Heart left ventricle (tissue), 16 donors: ENCODE measurements at regions of chr5 and their contacts with region 1.

Region 1: GRCh38 chr5:923281-923873 is 30.7 kb downstream of the TRIP13 start:
- DNase-seq: peak; percentile 78 to 89 (median 84)
- ATAC-seq: peak; percentile 78 to 93 (median 92)
- H3K4me3 ChIP-seq: no peak overlapping the region
- H3K27ac ChIP-seq: no peak overlapping the region
- H3K4me1 ChIP-seq: peaks cover 0 to 16% (median 8%) of the 10 kb centered on the region in 12 donors
- H3K27me3 ChIP-seq: peaks cover 0 to 29% (median 6%) of the 10 kb centered on the region in 9 donors
- CTCF ChIP-seq: peak; percentile 70 to 91 (median 86)
- POLR2A ChIP-seq: no peak

Region 2: GRCh38 chr5:1004461-1005248 is 81.3 kb after region 1 on chr5:
- intact Hi-C with region 1: loop called in 2 of 10 experiments (anchors 10 kb)
- DNase-seq: peak; percentile 76 to 92 (median 88)
- ATAC-seq: peak in 3 of 4 donors; percentile 73 to 86 (median 77)
- H3K4me3 ChIP-seq: peak overlapping the region; percentile 43 to 74 (median 62)
- H3K27ac ChIP-seq: peak overlapping the region in 11 of 12 donors; percentile 11 to 78 (median 75)
- H3K4me1 ChIP-seq: peaks cover 0 to 40% (median 20%) of the 10 kb centered on the region in 12 donors
- H3K27me3 ChIP-seq: peaks cover 5 to 48% (median 8%) of the 10 kb centered on the region in 9 donors
- CTCF ChIP-seq: peak; percentile 19 to 71 (median 50)
- POLR2A ChIP-seq: no peak

Region 3: DNA sequence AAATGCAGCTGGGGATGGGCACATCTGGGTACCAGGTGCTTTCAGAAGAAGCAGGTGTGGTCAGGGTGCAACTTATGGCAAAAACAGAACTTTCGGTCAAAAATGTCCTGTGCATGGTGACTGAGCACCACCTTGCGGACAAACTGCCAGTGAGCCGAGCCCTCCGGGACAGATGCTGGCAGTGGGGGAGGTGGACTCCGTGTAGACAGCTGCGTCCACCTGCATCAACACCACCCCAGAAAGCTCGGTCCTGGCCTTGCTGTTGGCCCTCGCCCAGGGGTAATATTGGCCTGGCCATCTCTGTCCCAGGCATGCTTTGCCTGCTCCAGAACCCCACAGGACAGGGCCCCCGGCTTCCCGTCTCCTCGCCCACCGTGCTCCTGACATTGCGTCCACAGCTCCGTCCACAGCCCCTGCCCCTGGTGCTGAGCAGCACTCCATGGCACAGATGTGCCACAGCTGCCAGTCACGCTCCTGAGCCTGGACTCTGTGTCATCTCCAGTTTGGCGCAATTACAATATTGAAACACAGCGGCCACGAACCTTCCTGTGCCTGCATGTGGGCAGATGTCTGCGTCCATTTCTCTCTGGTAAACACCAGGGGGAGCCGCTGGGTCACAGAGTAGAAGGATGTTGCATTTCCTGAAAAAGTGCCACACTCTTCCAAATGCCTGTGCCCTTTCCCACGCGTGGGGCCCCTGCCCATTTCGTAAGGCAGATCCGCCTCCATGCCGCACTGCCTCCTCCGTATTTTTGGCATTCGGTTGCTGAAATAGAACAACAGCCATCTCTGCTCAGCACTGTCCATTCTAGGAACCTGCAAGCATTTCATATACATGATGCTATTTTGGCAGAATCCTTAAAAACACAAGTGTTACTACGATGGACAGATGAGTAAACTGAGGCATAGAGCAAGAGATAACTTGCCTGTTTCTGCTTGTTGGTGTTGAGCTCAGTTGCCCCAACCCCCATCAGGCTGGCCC is 244.6 kb after region 1 on chr5:
- intact Hi-C with region 1: loop called in 9 of 10 experiments (anchors 1 to 5 kb)
- DNase-seq: peak; percentile 64 to 80 (median 69)
- ATAC-seq: peak; percentile 62 to 84 (median 71)
- H3K4me3 ChIP-seq: peak overlapping the region in 6 of 12 donors; percentile 5 to 32 (median 13)
- H3K27ac ChIP-seq: no peak overlapping the region
- H3K4me1 ChIP-seq: peaks cover 0 to 12% (median 7%) of the 10 kb centered on the region in 12 donors
- H3K27me3 ChIP-seq: peaks cover 0 to 8% (median 0%) of the 10 kb centered on the region in 9 donors
- CTCF ChIP-seq: peak; percentile 40 to 73 (median 62)
- POLR2A ChIP-seq: no peak

Region 4: GRCh38 chr5:1174122-1174936 is 251.0 kb after region 1 on chr5:
- intact Hi-C with region 1: loop called in 7 of 10 experiments (anchors 1 to 5 kb)
- DNase-seq: peak; percentile 53 to 77 (median 66)
- ATAC-seq: peak; percentile 55 to 76 (median 64)
- H3K4me3 ChIP-seq: no peak overlapping the region
- H3K27ac ChIP-seq: no peak overlapping the region
- H3K4me1 ChIP-seq: peaks cover 0 to 5% (median 0%) of the 10 kb centered on the region in 12 donors
- H3K27me3 ChIP-seq: no peaks in the 10 kb centered on the region
- CTCF ChIP-seq: peak; percentile 63 to 85 (median 74)
- POLR2A ChIP-seq: no peak